Transverse colon (tissue), 4 donors: ENCODE measurements at regions of chr10 and their contacts with region 1.

Region 1: GRCh38 chr10:89296220-89296648 is 5.6 kb upstream of the IFIT2 start:
- DNase-seq: no peak
- H3K4me3 ChIP-seq: no peak overlapping the region
- H3K27ac ChIP-seq: peak overlapping the region; percentile 66 to 75 (median 72)
- H3K4me1 ChIP-seq: peaks cover 9 to 24% (median 16%) of the 10 kb centered on the region in 4 donors
- H3K27me3 ChIP-seq: no peaks in the 10 kb centered on the region
- CTCF ChIP-seq: no peak
- EP300 ChIP-seq: no peak
- POLR2A ChIP-seq: no peak

Region 2: DNA sequence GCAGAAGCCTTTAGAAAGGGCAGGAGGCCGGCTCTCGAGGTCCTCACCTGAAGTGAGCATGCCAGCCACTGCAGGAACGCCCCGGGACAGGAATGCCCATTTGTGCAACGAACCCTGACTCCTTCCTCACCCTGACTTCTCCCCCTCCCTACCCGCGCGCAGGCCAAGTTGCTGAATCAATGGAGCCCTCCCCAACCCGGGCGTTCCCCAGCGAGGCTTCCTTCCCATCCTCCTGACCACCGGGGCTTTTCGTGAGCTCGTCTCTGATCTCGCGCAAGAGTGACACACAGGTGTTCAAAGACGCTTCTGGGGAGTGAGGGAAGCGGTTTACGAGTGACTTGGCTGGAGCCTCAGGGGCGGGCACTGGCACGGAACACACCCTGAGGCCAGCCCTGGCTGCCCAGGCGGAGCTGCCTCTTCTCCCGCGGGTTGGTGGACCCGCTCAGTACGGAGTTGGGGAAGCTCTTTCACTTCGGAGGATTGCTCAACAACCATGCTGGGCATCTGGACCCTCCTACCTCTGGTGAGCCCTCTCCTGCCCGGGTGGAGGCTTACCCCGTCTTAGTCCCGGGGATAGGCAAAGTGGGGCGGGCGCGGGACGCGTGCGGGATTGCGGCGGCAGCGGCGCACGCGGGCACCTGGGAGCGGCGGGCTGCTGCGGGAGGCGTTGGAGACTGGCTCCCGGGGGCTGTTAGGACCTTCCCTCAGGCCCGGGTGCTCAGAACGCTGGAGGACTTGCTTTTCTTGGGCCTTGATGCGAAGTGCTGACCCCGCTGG is 305.7 kb before region 1 on chr10 and contains the start of gene FAS:
- in situ Hi-C with region 1: no loop called
- intact Hi-C with region 1: loop called (anchors 10 kb)
- DNase-seq: peak; percentile 86
- H3K4me3 ChIP-seq: peak within 1 kb of the TSS; percentile 54 to 89 (median 70)
- H3K27ac ChIP-seq: peak within 1 kb of the TSS; percentile 91 to 97 (median 96)
- H3K4me1 ChIP-seq: peaks cover 8 to 66% (median 40%) of the 10 kb centered on the region in 4 donors
- H3K27me3 ChIP-seq: no peaks in the 10 kb centered on the region
- CTCF ChIP-seq: peak in 1 of 5 experiments; percentile 1
- EP300 ChIP-seq: no peak
- POLR2A ChIP-seq: peak; percentile 81
- total RNA-seq, gene FAS: 9.0 to 58.5 (median 53.6) TPM

Region 3: GRCh38 chr10:89327784-89328441 is 31.7 kb after region 1 on chr10 and contains the start of gene IFIT3:
- in situ Hi-C with region 1: no loop called
- intact Hi-C with region 1: no loop called
- DNase-seq: peak; percentile 52
- H3K4me3 ChIP-seq: peak within 1 kb of the TSS in 3 of 4 donors; percentile 34 to 47 (median 37)
- H3K27ac ChIP-seq: peak within 1 kb of the TSS; percentile 70 to 83 (median 78)
- H3K4me1 ChIP-seq: peaks cover under 1 to 38% (median 11%) of the 10 kb centered on the region in 4 donors
- H3K27me3 ChIP-seq: no peaks in the 10 kb centered on the region
- CTCF ChIP-seq: peak in 1 of 5 experiments; percentile 11
- EP300 ChIP-seq: no peak
- POLR2A ChIP-seq: peak; percentile 24
- total RNA-seq, gene IFIT3: 0.20 to 7.8 (median 5.1) TPM in 3 of 4 donors, not detected in the other